Vagina (tissue), 2 donors: ENCODE measurements at regions of chr16 and their contacts with region 1.

Region 1: GRCh38 chr16:21554795-21555585 is 44.4 kb upstream of the METTL9 start:
- DNase-seq: no peak
- H3K4me3 ChIP-seq: no peak overlapping the region
- H3K27ac ChIP-seq: no peak overlapping the region
- H3K4me1 ChIP-seq: peaks cover 8% of the 10 kb centered on the region
- H3K27me3 ChIP-seq: no peaks in the 10 kb centered on the region
- CTCF ChIP-seq: peak; percentile 88 to 99 (median 90)
- POLR2A ChIP-seq: peak in 1 of 2 donors; percentile 0

Region 2: GRCh38 chr16:19997264-19997663 is 1557.7 kb before region 1 on chr16:
- intact Hi-C with region 1: no loop called
- DNase-seq: no peak
- H3K4me3 ChIP-seq: no peak overlapping the region
- H3K27ac ChIP-seq: no peak overlapping the region
- H3K4me1 ChIP-seq: no peaks in the 10 kb centered on the region
- H3K27me3 ChIP-seq: no peaks in the 10 kb centered on the region
- CTCF ChIP-seq: no peak
- POLR2A ChIP-seq: no peak

Region 3: GRCh38 chr16:21501909-21502667 is 52.9 kb before region 1 on chr16:
- intact Hi-C with region 1: loop called (anchors 10 kb)
- DNase-seq: no peak
- H3K4me3 ChIP-seq: peak overlapping the region; percentile 76 to 93
- H3K27ac ChIP-seq: peak overlapping the region; percentile 87
- H3K4me1 ChIP-seq: peaks cover 7% of the 10 kb centered on the region
- H3K27me3 ChIP-seq: no peaks in the 10 kb centered on the region
- CTCF ChIP-seq: no peak
- POLR2A ChIP-seq: peak in 1 of 2 donors; percentile 93

Region 4: DNA sequence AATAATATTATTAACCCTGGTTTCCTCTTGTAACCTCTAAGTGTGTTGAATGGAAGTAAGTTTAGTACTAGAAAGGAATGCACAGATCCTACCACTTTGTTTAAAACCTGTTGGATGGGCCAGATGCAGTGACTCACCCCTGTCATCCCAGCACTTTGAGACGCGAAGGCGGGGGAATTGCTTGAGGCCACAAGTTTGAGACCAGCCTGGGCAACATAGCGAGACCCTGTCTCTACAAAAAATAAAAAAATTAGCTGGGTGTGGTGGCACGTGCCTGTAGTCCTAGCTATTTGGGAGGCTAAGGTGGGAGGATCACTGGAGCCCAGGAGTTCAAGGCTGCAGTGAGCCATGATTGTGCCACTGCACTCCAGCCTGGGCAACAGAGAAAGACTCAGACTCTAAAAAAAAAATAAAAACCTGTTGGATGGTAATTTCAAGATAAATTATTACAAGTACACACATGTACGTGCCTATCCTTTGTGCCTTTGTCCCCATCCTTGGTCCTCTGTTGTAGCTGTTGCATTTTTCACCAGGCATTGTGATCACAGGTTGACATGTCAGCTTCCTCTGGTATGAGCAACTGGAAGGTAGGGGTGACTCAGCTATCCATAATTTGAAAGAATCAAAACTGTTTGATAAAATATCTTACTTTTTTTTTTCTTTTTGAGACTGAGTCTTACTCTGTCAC is 13.7 kb after region 1 on chr16:
- intact Hi-C with region 1: no loop called
- DNase-seq: no peak
- H3K4me3 ChIP-seq: no peak overlapping the region
- H3K27ac ChIP-seq: no peak overlapping the region
- H3K4me1 ChIP-seq: no peaks in the 10 kb centered on the region
- H3K27me3 ChIP-seq: no peaks in the 10 kb centered on the region
- CTCF ChIP-seq: no peak
- POLR2A ChIP-seq: no peak

Region 5: GRCh38 chr16:22677024-22677830 is 1122.2 kb after region 1 on chr16:
- intact Hi-C with region 1: loop called (anchors 5 kb)
- DNase-seq: peak; percentile 84 to 86
- H3K4me3 ChIP-seq: no peak overlapping the region
- H3K27ac ChIP-seq: no peak overlapping the region
- H3K4me1 ChIP-seq: no peaks in the 10 kb centered on the region
- H3K27me3 ChIP-seq: no peaks in the 10 kb centered on the region
- CTCF ChIP-seq: no peak
- POLR2A ChIP-seq: no peak